HCT116 (cell line): ENCODE measurements at regions of chr2 and their contacts with region 1.

Region 1: GRCh38 chr2:64914735-64915509 is 74.3 kb upstream of the SLC1A4 start:
- DNase-seq: no peak
- ATAC-seq: no peak
- H3K4me3 ChIP-seq: no peak overlapping the region
- H3K27ac ChIP-seq: no peak overlapping the region
- H3K4me1 ChIP-seq: peaks cover 2 to 12% of the 10 kb centered on the region in 2 experiments; a peak in 1 of 4 replicates
- H3K27me3 ChIP-seq: no peaks in the 10 kb centered on the region
- CTCF ChIP-seq: no peak
- POLR2A ChIP-seq: no peak
- RAD21 ChIP-seq: no peak

Region 2: DNA sequence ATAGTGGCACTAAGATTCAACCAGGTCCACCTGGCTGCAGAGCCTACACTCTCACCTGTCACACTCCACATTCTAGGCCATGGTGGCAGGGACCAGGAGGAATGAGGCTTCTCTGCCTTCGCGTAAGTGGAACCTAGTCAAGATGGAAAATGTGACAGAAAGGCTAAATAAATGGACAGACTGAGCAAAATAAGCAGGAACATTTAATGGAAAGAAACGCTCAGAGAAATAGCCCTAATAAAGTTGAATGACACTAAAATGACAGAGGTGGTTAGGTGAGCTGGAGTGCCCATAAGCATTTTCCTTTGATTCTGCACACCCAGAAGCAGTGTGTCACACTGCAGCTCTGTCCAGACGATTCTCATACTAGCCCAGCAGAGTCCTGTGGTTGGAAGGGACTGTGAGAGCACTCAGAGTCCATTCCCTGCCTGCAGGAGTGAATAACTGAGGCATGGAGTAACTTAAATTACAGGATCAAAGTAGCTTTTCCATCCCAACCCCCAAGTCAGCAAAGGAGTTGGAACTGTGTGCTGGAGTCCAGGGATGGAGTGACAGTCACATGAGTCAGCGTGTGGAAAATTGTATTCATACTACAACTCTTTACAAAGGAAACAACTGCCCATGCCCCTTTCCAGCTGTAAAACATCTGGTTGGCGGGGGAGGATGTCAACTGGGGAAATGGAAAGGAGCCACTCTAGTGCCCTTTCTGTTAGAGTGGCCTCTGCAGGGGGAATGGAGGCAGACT is 566.4 kb before region 1 on chr2:
- CTCF ChIA-PET with region 1: no interaction called
- POLR2A ChIA-PET with region 1: no interaction called
- RAD21 ChIA-PET with region 1: no interaction called
- intact Hi-C with region 1: no loop called
- DNase-seq: no peak
- ATAC-seq: peak; percentile 50; the same call in 1 of the 2 replicates
- H3K4me3 ChIP-seq: no peak overlapping the region
- H3K27ac ChIP-seq: no peak overlapping the region
- H3K4me1 ChIP-seq: peaks cover 0 to 20% of the 10 kb centered on the region in 2 experiments; a peak in 2 of 4 replicates
- H3K27me3 ChIP-seq: no peaks in the 10 kb centered on the region
- CTCF ChIP-seq: no peak
- POLR2A ChIP-seq: no peak
- RAD21 ChIP-seq: no peak

Region 3: DNA sequence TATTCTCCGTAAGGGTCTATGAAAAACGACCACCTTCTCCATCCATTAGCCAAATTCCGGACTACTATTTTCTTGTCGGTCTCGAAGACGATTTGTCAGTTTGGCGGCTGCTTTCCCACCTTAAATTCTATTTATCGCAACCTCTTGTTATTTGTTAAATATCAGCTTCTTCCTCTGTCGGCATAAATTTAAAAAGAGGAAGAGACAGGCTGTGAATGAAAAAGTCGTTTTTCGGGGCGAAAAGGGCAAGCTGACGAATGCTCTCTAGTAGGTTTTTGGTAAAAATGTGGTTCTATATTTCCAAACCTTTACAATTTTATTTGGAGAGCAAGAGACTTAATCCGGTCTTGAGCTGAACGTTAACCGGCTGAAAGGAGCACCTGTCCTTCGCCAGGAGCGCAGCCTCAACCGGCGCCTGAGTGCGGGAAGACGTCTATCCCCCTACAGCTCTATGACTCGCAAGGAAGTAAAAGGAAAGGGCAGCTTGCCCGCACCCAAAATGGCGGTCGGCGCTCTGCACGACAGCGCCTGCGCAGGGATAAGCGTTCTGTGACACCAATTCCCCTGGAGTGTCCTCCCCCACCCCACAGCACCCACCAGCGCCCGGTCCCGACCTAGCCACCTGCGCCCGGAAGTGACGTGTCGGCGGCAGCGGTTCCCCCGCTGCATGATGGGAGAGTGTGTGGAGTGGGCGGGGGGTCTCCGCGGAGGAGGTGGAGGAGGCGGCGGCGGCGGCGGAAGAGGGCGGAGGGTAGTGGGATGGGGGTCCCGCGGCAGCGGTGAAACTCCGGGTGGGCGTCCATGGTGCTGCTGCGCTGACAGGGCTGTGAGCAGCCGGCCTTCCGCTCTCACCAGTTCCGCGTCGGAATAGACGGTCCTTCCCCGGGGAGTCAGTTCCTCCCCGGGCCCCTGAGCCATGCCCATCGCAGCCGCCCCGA is 391.0 kb before region 1 on chr2 and contains the start of gene AFTPH:
- CTCF ChIA-PET with region 1: interaction called, 9 read pairs
- POLR2A ChIA-PET with region 1: no interaction called
- RAD21 ChIA-PET with region 1: interaction called in 1 of 2 experiments, 3 read pairs
- intact Hi-C with region 1: loop called (anchors 1 kb)
- DNase-seq: peak; percentile 96
- ATAC-seq: peak; percentile 95
- H3K4me3 ChIP-seq: peak within 1 kb of the TSS; percentile 70 to 91
- H3K27ac ChIP-seq: peak within 1 kb of the TSS; percentile 78
- H3K4me1 ChIP-seq: peaks cover 6 to 20% of the 10 kb centered on the region in 2 experiments; a peak in 3 of 4 replicates
- H3K27me3 ChIP-seq: no peaks in the 10 kb centered on the region
- CTCF ChIP-seq: no peak
- POLR2A ChIP-seq: peak; percentile 75
- RAD21 ChIP-seq: no peak
- total RNA-seq, gene AFTPH: 23.6 TPM

Region 4: GRCh38 chr2:65031341-65032018 is 116.6 kb after region 1 on chr2:
- CTCF ChIA-PET with region 1: interaction called, 32 read pairs
- POLR2A ChIA-PET with region 1: no interaction called
- RAD21 ChIA-PET with region 1: interaction called, 3 to 7 read pairs
- intact Hi-C with region 1: loop called (anchors 2 kb)
- DNase-seq: no peak
- ATAC-seq: no peak
- H3K4me3 ChIP-seq: no peak overlapping the region
- H3K27ac ChIP-seq: no peak overlapping the region
- H3K4me1 ChIP-seq: no peaks in the 10 kb centered on the region
- H3K27me3 ChIP-seq: no peaks in the 10 kb centered on the region
- CTCF ChIP-seq: no peak
- POLR2A ChIP-seq: no peak
- RAD21 ChIP-seq: no peak

Region 5: GRCh38 chr2:65056215-65057053 is 141.5 kb after region 1 on chr2 and contains the start of gene CEP68:
- CTCF ChIA-PET with region 1: interaction called, 11 read pairs
- POLR2A ChIA-PET with region 1: no interaction called
- RAD21 ChIA-PET with region 1: interaction called, 3 to 8 read pairs
- intact Hi-C with region 1: loop called (anchors 5 kb)
- DNase-seq: peak; percentile 93
- ATAC-seq: peak; percentile 96
- H3K4me3 ChIP-seq: peak within 1 kb of the TSS; percentile 67 to 70
- H3K27ac ChIP-seq: peak within 1 kb of the TSS; percentile 65; the same call in 1 of the 2 replicates
- H3K4me1 ChIP-seq: peaks cover 6 to 21% of the 10 kb centered on the region in 2 experiments; a peak in 3 of 4 replicates
- H3K27me3 ChIP-seq: no peaks in the 10 kb centered on the region
- CTCF ChIP-seq: no peak
- POLR2A ChIP-seq: peak; percentile 72
- RAD21 ChIP-seq: no peak
- total RNA-seq, gene CEP68: 11.2 TPM

Region 6: GRCh38 chr2:65186872-65187851 is 272.2 kb after region 1 on chr2:
- CTCF ChIA-PET with region 1: interaction called, 6 read pairs
- POLR2A ChIA-PET with region 1: no interaction called
- RAD21 ChIA-PET with region 1: no interaction called
- intact Hi-C with region 1: loop called (anchors 5 kb)
- DNase-seq: peak; percentile 43
- ATAC-seq: peak; percentile 99
- H3K4me3 ChIP-seq: no peak overlapping the region
- H3K27ac ChIP-seq: no peak overlapping the region
- H3K4me1 ChIP-seq: peaks cover 0 to 4% of the 10 kb centered on the region in 2 experiments; a peak in 1 of 4 replicates
- H3K27me3 ChIP-seq: no peaks in the 10 kb centered on the region
- CTCF ChIP-seq: peak; percentile 59 to 84 (median 83); a peak in 5 of 6 replicates
- POLR2A ChIP-seq: no peak
- RAD21 ChIP-seq: peak; percentile 85